Activated CD4-positive, alpha-beta T cell treated with anti-CD3 and anti-CD28 coated beads for 36 hours (primary cell): ENCODE measurements at regions of chr18 and their contacts with region 1.

Region 1: DNA sequence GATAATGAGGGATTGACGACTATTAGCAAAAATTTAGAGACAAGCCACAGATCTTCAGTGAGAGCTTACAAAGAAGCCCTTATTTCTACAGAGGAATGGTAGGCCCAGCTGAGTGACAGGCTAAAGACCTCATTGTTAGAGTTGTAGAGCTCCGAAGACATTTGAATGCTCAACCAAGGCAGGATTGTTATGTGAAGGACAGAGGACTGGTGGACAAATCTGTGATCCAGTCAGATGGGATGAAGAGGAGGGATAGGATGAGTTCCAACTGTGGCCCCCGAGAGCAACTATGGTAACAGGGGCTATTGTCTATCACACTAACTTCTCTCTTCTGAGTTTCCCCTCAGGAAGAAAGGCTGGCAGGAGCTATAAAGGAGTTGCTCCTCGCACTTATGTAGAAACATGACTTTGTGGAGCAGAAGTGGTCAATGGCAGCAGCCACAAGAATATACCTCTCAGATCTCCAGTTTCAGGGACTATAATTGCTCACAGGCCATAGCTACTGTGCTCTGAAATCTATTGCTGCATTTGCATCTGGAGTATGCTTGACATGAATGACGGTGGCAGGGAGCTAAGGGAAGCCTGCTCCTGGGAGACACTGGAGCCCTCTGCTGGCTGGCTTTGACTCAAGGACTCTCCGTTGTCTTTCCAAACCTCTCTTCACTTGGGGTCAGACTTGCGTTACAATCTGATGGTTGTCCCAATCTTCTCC is 50.3 kb upstream of the GREB1L start:
- DNase-seq: peak; percentile 56
- ATAC-seq: peak; percentile 30
- H3K4me3 Mint-ChIP-seq: no peak overlapping the region
- H3K27ac Mint-ChIP-seq: no peak overlapping the region
- H3K4me1 Mint-ChIP-seq: no peaks in the 10 kb centered on the region
- H3K27me3 Mint-ChIP-seq: peaks cover 8% of the 10 kb centered on the region

Region 2: GRCh38 chr18:21179590-21180220 is 12.0 kb before region 1 on chr18:
- CTCF ChIA-PET with region 1: interaction called, 49 read pairs
- POLR2A ChIA-PET with region 1: no interaction called
- intact Hi-C with region 1: no loop called
- DNase-seq: peak; percentile 66
- ATAC-seq: peak; percentile 71
- H3K4me3 Mint-ChIP-seq: no peak overlapping the region
- H3K27ac Mint-ChIP-seq: no peak overlapping the region
- H3K4me1 Mint-ChIP-seq: peaks cover 4% of the 10 kb centered on the region
- H3K27me3 Mint-ChIP-seq: no peaks in the 10 kb centered on the region

Region 3: GRCh38 chr18:21270453-21270852 is 78.7 kb after region 1 on chr18:
- CTCF ChIA-PET with region 1: no interaction called
- POLR2A ChIA-PET with region 1: no interaction called
- intact Hi-C with region 1: loop called in 1 of 2 experiments (anchors 10 kb)
- DNase-seq: no peak
- ATAC-seq: no peak
- H3K4me3 Mint-ChIP-seq: no peak overlapping the region
- H3K27ac Mint-ChIP-seq: no peak overlapping the region
- H3K4me1 Mint-ChIP-seq: no peaks in the 10 kb centered on the region
- H3K27me3 Mint-ChIP-seq: peaks cover 9% of the 10 kb centered on the region

Region 4: DNA sequence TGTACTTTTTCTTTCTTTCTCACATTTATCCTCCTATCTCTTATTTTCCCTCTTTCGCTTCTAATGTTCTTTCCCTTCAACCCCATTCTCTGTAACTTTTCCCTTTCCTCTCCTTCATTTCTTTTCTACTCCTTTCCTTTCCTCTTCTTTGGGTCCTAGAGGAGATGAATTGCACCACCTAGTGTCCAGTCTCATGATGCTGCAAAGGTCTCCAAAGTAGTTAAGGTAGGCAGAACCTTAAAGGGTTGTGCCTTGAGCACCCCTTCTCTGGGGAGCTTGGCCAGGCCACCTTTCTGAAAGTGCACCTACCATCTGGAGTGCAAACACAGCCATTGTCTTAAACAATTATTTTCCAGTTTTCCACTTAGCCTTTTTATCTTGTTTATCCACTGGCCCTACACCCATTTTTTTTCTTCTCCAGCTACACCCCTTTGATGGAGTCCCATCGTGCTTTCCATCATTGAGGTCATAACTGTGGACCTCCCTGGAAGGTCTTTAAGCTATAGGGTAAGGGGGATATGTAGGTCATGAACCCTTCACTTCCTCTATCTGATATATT is 252.8 kb after region 1 on chr18:
- CTCF ChIA-PET with region 1: interaction called, 12 read pairs
- POLR2A ChIA-PET with region 1: no interaction called
- intact Hi-C with region 1: loop called (anchors 1 kb)
- DNase-seq: peak; percentile 18
- ATAC-seq: no peak
- H3K4me3 Mint-ChIP-seq: no peak overlapping the region
- H3K27ac Mint-ChIP-seq: no peak overlapping the region
- H3K4me1 Mint-ChIP-seq: no peaks in the 10 kb centered on the region
- H3K27me3 Mint-ChIP-seq: peaks cover 14% of the 10 kb centered on the region

Region 5: GRCh38 chr18:21629089-21629832 is 437.5 kb after region 1 on chr18:
- CTCF ChIA-PET with region 1: no interaction called
- POLR2A ChIA-PET with region 1: no interaction called
- intact Hi-C with region 1: loop called in 1 of 2 experiments (anchors 10 kb)
- DNase-seq: no peak
- ATAC-seq: no peak
- H3K4me3 Mint-ChIP-seq: no peak overlapping the region
- H3K27ac Mint-ChIP-seq: peak overlapping the region; percentile 84
- H3K4me1 Mint-ChIP-seq: peaks cover 11% of the 10 kb centered on the region
- H3K27me3 Mint-ChIP-seq: no peaks in the 10 kb centered on the region

Region 6: GRCh38 chr18:21955757-21956652 is 764.3 kb after region 1 on chr18:
- CTCF ChIA-PET with region 1: interaction called, 3 read pairs
- POLR2A ChIA-PET with region 1: no interaction called
- intact Hi-C with region 1: loop called (anchors 1 kb)
- DNase-seq: peak; percentile 88
- ATAC-seq: peak; percentile 84
- H3K4me3 Mint-ChIP-seq: no peak overlapping the region
- H3K27ac Mint-ChIP-seq: no peak overlapping the region
- H3K4me1 Mint-ChIP-seq: no peaks in the 10 kb centered on the region
- H3K27me3 Mint-ChIP-seq: peaks cover 8% of the 10 kb centered on the region

Region 7: DNA sequence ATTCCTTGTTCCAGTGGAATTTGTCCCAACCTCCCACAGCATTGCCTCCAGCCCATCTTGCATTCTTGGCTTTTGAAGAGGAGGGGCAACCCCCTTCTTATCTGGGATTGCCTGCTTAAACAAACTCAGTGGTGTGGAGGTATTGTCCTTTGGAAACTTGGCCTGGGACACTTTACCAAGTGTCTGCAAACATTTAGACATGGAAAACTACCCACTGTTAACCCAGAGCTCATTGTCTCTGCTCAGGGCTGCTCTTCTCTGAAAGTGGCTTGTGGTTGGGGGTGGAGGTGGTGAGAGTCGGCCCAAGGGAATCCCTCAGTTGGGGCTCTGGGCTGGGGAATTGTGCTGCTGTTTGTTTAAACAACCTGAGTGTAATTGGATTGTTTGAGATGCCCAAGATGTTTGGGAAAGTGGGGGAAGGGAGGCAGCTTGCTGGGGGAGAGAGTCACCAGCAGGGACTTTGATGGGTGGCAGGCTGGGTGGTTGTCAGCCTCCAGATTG is 799.4 kb after region 1 on chr18:
- CTCF ChIA-PET with region 1: no interaction called
- POLR2A ChIA-PET with region 1: no interaction called
- intact Hi-C with region 1: no loop called
- DNase-seq: no peak
- ATAC-seq: no peak
- H3K4me3 Mint-ChIP-seq: no peak overlapping the region
- H3K27ac Mint-ChIP-seq: no peak overlapping the region
- H3K4me1 Mint-ChIP-seq: no peaks in the 10 kb centered on the region
- H3K27me3 Mint-ChIP-seq: no peaks in the 10 kb centered on the region